Prostate gland (tissue), 2 donors: ENCODE measurements at regions of chr2 and their contacts with region 1.

Region 1: GRCh38 chr2:224778474-224778877 is 62.3 kb upstream of the CCDC195 start:
- DNase-seq: peak; percentile 25
- H3K4me3 ChIP-seq: no peak overlapping the region
- H3K27ac ChIP-seq: no peak overlapping the region
- H3K4me1 ChIP-seq: no peaks in the 10 kb centered on the region
- H3K27me3 ChIP-seq: no peaks in the 10 kb centered on the region
- CTCF ChIP-seq: peak; percentile 29 to 71 (median 56)
- POLR2A ChIP-seq: no peak

Region 2: DNA sequence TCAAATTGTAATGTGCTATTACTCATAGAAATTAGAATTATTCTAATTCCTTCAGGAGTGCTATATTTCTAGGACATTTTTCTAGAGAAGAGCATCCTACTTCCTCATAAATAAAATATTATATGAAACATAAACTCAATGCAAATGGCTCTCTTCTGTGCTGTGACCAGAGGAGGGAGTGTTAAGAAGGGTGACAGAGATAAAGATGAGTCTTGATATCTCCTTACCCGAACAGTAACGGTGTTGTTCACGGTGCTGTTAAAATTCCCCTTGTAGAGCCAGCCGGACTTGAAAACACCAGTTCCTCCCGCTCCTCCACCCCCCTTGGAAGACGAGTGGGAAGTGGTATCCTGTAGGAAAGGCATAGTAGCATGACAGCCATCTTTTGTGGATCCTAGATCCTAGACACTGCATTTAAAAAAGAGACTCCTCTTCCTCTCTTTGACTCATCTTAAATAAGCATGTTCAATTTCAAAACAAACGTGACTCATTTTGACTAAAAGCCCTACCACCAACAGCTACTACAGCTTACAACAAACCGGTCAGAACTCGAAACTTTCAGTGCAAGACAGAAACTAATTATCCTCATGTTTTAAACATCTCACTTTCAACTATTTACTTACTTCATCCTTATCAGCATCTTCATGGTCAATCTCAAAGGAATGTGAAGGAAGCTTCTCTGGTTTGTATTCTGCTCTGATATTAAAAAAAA is 107.5 kb after region 1 on chr2:
- intact Hi-C with region 1: no loop called
- DNase-seq: no peak
- H3K4me3 ChIP-seq: no peak overlapping the region
- H3K27ac ChIP-seq: no peak overlapping the region
- H3K4me1 ChIP-seq: no peaks in the 10 kb centered on the region
- H3K27me3 ChIP-seq: no peaks in the 10 kb centered on the region
- CTCF ChIP-seq: no peak
- POLR2A ChIP-seq: no peak

Region 3: GRCh38 chr2:225002039-225002655 is 223.7 kb after region 1 on chr2:
- intact Hi-C with region 1: loop called (anchors 10 kb)
- DNase-seq: peak; percentile 46
- H3K4me3 ChIP-seq: no peak overlapping the region
- H3K27ac ChIP-seq: no peak overlapping the region
- H3K4me1 ChIP-seq: no peaks in the 10 kb centered on the region
- H3K27me3 ChIP-seq: no peaks in the 10 kb centered on the region
- CTCF ChIP-seq: peak; percentile 39 to 76 (median 74)
- POLR2A ChIP-seq: no peak